Activated CD4-positive, alpha-beta T cell treated with anti-CD3 and anti-CD28 coated beads for 36 hours (primary cell): ENCODE measurements at regions of chr18 and their contacts with region 1.

Region 1: DNA sequence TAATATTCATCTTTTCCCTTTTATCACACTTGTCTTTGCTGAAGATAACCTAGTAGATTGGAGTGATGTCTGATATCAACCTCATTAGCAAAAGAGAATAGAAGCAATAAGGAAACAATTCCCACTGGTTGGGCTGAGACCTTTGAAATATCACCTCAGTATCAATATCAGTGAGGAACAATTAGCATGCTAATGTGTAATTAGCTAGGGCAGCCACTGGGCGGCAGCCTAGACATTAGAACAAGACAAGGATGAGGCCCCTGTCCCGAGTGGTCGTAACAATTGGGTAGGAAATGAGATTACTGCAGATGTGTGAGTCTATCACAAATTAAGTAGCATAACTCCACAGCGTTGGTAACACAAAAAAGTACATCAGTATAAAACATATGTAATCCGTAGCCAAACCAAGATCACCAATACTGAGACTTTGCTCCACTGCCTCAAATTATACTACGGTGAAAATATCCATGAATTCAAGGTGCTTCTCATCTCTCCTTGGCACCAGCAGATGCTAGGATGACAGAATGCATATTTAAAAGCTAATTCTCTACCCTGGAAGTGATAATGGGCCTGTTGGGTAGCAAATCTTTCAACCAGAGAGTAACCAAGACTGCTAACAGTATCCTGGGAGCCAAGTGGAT is 99.1 kb downstream of the ALPK2 start:
- DNase-seq: peak; percentile 83
- ATAC-seq: peak; percentile 39
- H3K4me3 Mint-ChIP-seq: no peak overlapping the region
- H3K27ac Mint-ChIP-seq: no peak overlapping the region
- H3K4me1 Mint-ChIP-seq: peaks cover 30% of the 10 kb centered on the region
- H3K27me3 Mint-ChIP-seq: peaks cover 13% of the 10 kb centered on the region

Region 2: DNA sequence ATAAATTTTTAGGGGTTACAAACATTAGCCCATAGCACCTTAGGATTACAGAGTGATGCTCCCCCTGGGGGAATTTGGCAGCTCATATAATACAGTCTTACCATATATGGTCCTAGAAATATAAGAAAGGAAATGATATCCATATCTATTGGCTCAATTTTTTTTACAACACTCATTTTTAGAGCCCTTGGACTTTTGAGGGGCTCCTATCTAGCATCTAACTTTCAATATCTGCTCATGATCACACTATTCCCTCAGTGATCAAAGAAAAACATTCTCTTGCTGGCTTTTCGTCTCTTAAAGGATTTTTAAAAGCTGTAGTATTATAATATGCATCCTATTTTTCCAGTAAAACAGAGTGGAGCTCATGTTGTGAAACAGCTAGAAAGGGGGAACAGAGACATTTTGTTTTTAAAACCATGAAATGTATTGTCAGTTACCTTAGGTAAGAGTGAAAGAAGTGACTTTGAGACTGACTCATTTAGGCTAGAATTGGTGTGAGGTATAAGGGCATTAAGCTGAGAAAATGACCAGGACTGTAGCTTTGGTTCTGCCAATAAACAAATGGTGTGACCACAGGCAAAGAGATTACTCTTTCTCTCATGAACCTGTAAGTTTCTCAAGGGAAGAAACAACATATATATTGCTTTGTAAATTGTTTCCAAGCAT is 33.3 kb after region 1 on chr18:
- CTCF ChIA-PET with region 1: interaction called, 12 read pairs
- POLR2A ChIA-PET with region 1: no interaction called
- intact Hi-C with region 1: no loop called
- DNase-seq: no peak
- ATAC-seq: peak; percentile 35
- H3K4me3 Mint-ChIP-seq: no peak overlapping the region
- H3K27ac Mint-ChIP-seq: peak overlapping the region; percentile 31
- H3K4me1 Mint-ChIP-seq: peaks cover 20% of the 10 kb centered on the region
- H3K27me3 Mint-ChIP-seq: no peaks in the 10 kb centered on the region